ENCODE measurements at regions of chr5 and their contacts with region 1.

Region 1: GRCh38 chr5:134506054-134507039 is 19.1 kb upstream of the JADE2 start:
- DNase-seq: peak; percentile 97 to 99
- H3K4me3 ChIP-seq: peak overlapping the region; percentile 23
- H3K4me3 Mint-ChIP-seq: peak overlapping the region; percentile 75
- H3K27ac Mint-ChIP-seq: peak overlapping the region; percentile 93
- H3K4me1 ChIP-seq: peaks cover 66% of the 10 kb centered on the region
- H3K4me1 Mint-ChIP-seq: peaks cover 31% of the 10 kb centered on the region
- H3K27me3 ChIP-seq: no peaks in the 10 kb centered on the region
- H3K27me3 Mint-ChIP-seq: no peaks in the 10 kb centered on the region
- CTCF ChIP-seq: no peak

Region 2: GRCh38 chr5:134345996-134346395 is 160.4 kb before region 1 on chr5:
- CTCF ChIA-PET with region 1: no interaction called
- POLR2A ChIA-PET with region 1: no interaction called
- intact Hi-C with region 1: loop called (anchors 1 kb)
- DNase-seq: peak; percentile 90
- H3K4me3 ChIP-seq: no peak overlapping the region
- H3K4me3 Mint-ChIP-seq: peak overlapping the region; percentile 25
- H3K27ac Mint-ChIP-seq: peak overlapping the region; percentile 79
- H3K4me1 ChIP-seq: peaks cover 38% of the 10 kb centered on the region
- H3K4me1 Mint-ChIP-seq: peaks cover 20% of the 10 kb centered on the region
- H3K27me3 ChIP-seq: no peaks in the 10 kb centered on the region
- H3K27me3 Mint-ChIP-seq: no peaks in the 10 kb centered on the region
- CTCF ChIP-seq: no peak

Region 3: GRCh38 chr5:134436523-134437339 is 69.6 kb before region 1 on chr5:
- CTCF ChIA-PET with region 1: interaction called, 19 read pairs
- POLR2A ChIA-PET with region 1: interaction called, 19 read pairs
- intact Hi-C with region 1: loop called (anchors 1 kb)
- DNase-seq: peak; percentile 84 to 86
- H3K4me3 ChIP-seq: peak overlapping the region; percentile 19
- H3K4me3 Mint-ChIP-seq: peak overlapping the region; percentile 55
- H3K27ac Mint-ChIP-seq: peak overlapping the region; percentile 82
- H3K4me1 ChIP-seq: peaks cover 47% of the 10 kb centered on the region
- H3K4me1 Mint-ChIP-seq: peaks cover 54% of the 10 kb centered on the region
- H3K27me3 ChIP-seq: no peaks in the 10 kb centered on the region
- H3K27me3 Mint-ChIP-seq: no peaks in the 10 kb centered on the region
- CTCF ChIP-seq: no peak

Region 4: GRCh38 chr5:134446938-134447337 is 59.4 kb before region 1 on chr5:
- CTCF ChIA-PET with region 1: interaction called, 12 read pairs
- POLR2A ChIA-PET with region 1: interaction called, 7 read pairs
- intact Hi-C with region 1: loop called (anchors 2 kb)
- DNase-seq: peak; percentile 64 to 76
- H3K4me3 ChIP-seq: no peak overlapping the region
- H3K4me3 Mint-ChIP-seq: no peak overlapping the region
- H3K27ac Mint-ChIP-seq: peak overlapping the region; percentile 8
- H3K4me1 ChIP-seq: peaks cover 29% of the 10 kb centered on the region
- H3K4me1 Mint-ChIP-seq: peaks cover 23% of the 10 kb centered on the region
- H3K27me3 ChIP-seq: no peaks in the 10 kb centered on the region
- H3K27me3 Mint-ChIP-seq: no peaks in the 10 kb centered on the region
- CTCF ChIP-seq: no peak

Region 5: GRCh38 chr5:134465816-134466240 is 40.5 kb before region 1 on chr5:
- CTCF ChIA-PET with region 1: no interaction called
- POLR2A ChIA-PET with region 1: interaction called, 9 read pairs
- intact Hi-C with region 1: loop called (anchors 5 kb)
- DNase-seq: peak; percentile 52 to 56
- H3K4me3 ChIP-seq: no peak overlapping the region
- H3K4me3 Mint-ChIP-seq: peak overlapping the region; percentile 47
- H3K27ac Mint-ChIP-seq: no peak overlapping the region
- H3K4me1 ChIP-seq: peaks cover 12% of the 10 kb centered on the region
- H3K4me1 Mint-ChIP-seq: peaks cover 7% of the 10 kb centered on the region
- H3K27me3 ChIP-seq: no peaks in the 10 kb centered on the region
- H3K27me3 Mint-ChIP-seq: no peaks in the 10 kb centered on the region
- CTCF ChIP-seq: no peak

Region 6: GRCh38 chr5:134527146-134527960 is 21.0 kb after region 1 on chr5:
- CTCF ChIA-PET with region 1: interaction called, 18 read pairs
- POLR2A ChIA-PET with region 1: interaction called, 41 read pairs
- intact Hi-C with region 1: loop called (anchors 1 kb)
- DNase-seq: peak; percentile 89 to 94
- H3K4me3 ChIP-seq: peak overlapping the region; percentile 92
- H3K4me3 Mint-ChIP-seq: peak overlapping the region; percentile 96
- H3K27ac Mint-ChIP-seq: peak overlapping the region; percentile 92
- H3K4me1 ChIP-seq: peaks cover 31% of the 10 kb centered on the region
- H3K4me1 Mint-ChIP-seq: peaks cover 8% of the 10 kb centered on the region
- H3K27me3 ChIP-seq: no peaks in the 10 kb centered on the region
- H3K27me3 Mint-ChIP-seq: no peaks in the 10 kb centered on the region
- CTCF ChIP-seq: peak; percentile 76 to 79

Measured in Caco-2 (cell line).